PC-3 (cell line): ENCODE measurements at regions of chr1 and their contacts with region 1.

Region 1: GRCh38 chr1:180178511-180179161 is 24.0 kb downstream of the QSOX1 start:
- DNase-seq: peak; percentile 65
- ATAC-seq: peak; percentile 29
- H3K4me3 ChIP-seq: no peak overlapping the region
- H3K27ac ChIP-seq: no peak overlapping the region
- H3K4me1 ChIP-seq: 0 out of 2 replicates have a peak, but pooled peaks cover 1% of the 10 kb centered on the region
- H3K27me3 ChIP-seq: no peaks in the 10 kb centered on the region
- CTCF ChIP-seq: peak; percentile 85

Region 2: GRCh38 chr1:179867807-179868330 is 310.8 kb before region 1 on chr1:
- CTCF ChIA-PET with region 1: no interaction called
- POLR2A ChIA-PET with region 1: no interaction called
- intact Hi-C with region 1: loop called (anchors 2 kb)
- DNase-seq: peak; percentile 53
- ATAC-seq: peak; percentile 81
- H3K4me3 ChIP-seq: no peak overlapping the region
- H3K27ac ChIP-seq: no peak overlapping the region
- H3K4me1 ChIP-seq: no peaks in the 10 kb centered on the region
- H3K27me3 ChIP-seq: no peaks in the 10 kb centered on the region
- CTCF ChIP-seq: peak; percentile 83

Region 3: DNA sequence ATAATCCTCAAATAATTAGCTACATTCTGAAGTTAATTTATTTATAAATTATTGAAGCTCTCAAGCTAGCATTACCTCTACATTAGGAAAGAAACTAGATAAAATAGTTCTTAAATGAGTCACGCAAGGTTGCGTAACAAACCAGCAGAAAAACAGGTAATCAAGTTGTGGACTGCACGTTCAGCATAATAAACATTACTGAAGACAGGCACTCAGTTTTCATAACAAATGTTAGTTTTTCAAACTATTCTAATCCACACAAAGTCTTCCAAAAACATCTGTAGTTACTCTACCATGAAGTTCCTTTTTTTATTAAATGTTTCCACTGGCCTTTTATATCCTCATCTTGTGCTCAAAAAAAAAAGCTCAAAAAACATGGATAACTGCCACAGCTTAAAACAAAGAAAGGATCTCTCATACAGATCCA is 302.3 kb before region 1 on chr1:
- CTCF ChIA-PET with region 1: no interaction called
- POLR2A ChIA-PET with region 1: interaction called, 10 read pairs
- intact Hi-C with region 1: no loop called
- DNase-seq: peak; percentile 69
- ATAC-seq: no peak
- H3K4me3 ChIP-seq: peak overlapping the region; percentile 93
- H3K27ac ChIP-seq: no peak overlapping the region
- H3K4me1 ChIP-seq: peaks cover 19% of the 10 kb centered on the region
- H3K27me3 ChIP-seq: no peaks in the 10 kb centered on the region
- CTCF ChIP-seq: no peak

Region 4: GRCh38 chr1:180229152-180229973 is 50.7 kb after region 1 on chr1:
- CTCF ChIA-PET with region 1: no interaction called
- POLR2A ChIA-PET with region 1: no interaction called
- intact Hi-C with region 1: no loop called
- DNase-seq: peak; percentile 34
- ATAC-seq: peak; percentile 43
- H3K4me3 ChIP-seq: peak overlapping the region; percentile 67
- H3K27ac ChIP-seq: no peak overlapping the region
- H3K4me1 ChIP-seq: peaks cover 14% of the 10 kb centered on the region
- H3K27me3 ChIP-seq: peaks cover 45% of the 10 kb centered on the region
- CTCF ChIP-seq: no peak